HEK293 (cell line): ENCODE measurements at regions of chr6 and their contacts with region 1.

Region 1: GRCh38 chr6:159252955-159253508 is 83.8 kb downstream of the FNDC1 start:
- H3K4me3 ChIP-seq: no peak overlapping the region
- H3K27ac ChIP-seq: no peak overlapping the region
- H3K4me1 ChIP-seq: no peaks in the 10 kb centered on the region
- CTCF ChIP-seq: peak; percentile 43; the same call in 1 of the 2 replicates

Region 2: DNA sequence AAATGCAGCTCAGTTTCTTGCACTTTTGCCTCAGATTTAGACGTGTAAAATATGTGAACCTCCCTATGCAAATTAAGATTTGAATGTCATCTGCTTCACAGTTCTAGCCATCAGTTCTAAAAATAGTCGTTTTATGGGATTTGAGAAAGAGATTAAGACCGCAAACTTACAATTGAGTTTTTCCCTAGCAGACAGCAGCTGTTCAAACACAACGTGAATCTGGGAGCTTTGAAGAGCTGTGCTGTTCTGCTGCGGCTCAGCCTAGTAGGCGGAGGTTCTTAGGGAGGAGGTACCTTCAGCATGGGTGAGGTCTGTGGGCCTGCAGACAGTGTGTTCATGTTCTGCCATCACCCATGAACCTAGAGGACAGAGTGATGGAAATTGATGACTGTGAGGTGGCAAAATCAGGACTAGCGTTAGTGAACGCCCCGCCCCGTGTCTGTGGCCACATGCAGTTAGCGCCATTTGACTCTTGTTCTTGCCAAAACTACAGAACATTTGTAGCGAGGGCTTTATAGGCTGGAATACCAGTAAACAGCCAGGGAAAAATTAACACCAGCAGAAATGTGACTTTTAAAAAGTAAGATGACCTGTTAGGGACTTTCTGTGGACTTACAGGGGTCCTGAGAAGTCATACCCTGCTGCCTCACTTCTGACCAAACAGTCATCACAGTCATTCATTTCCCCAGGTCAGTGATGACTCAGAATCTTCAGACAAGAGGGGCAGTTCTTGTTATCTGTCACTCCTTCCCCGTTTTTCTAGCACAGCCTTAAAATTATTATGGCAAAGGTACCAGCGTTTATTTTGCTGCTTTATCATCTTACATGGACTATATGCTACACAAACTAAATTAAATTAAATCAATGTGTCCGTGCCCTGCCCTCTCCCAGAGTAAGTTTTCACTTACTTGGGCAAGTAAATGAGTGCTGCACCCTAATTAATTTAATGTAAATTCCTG is 777.4 kb before region 1 on chr6:
- CTCF ChIA-PET with region 1: no interaction called
- POLR2A ChIA-PET with region 1: no interaction called
- H3K4me3 ChIP-seq: no peak overlapping the region
- H3K27ac ChIP-seq: peak overlapping the region; percentile 56
- H3K4me1 ChIP-seq: peaks cover 12% of the 10 kb centered on the region
- CTCF ChIP-seq: no peak

Region 3: GRCh38 chr6:159212028-159212427 is 41.0 kb before region 1 on chr6:
- CTCF ChIA-PET with region 1: interaction called, 24 read pairs
- POLR2A ChIA-PET with region 1: no interaction called
- H3K4me3 ChIP-seq: no peak overlapping the region
- H3K27ac ChIP-seq: no peak overlapping the region
- H3K4me1 ChIP-seq: no peaks in the 10 kb centered on the region
- CTCF ChIP-seq: no peak

Region 4: GRCh38 chr6:159234102-159234553 is 18.9 kb before region 1 on chr6:
- CTCF ChIA-PET with region 1: interaction called, 32 read pairs
- POLR2A ChIA-PET with region 1: no interaction called
- H3K4me3 ChIP-seq: no peak overlapping the region
- H3K27ac ChIP-seq: no peak overlapping the region
- H3K4me1 ChIP-seq: no peaks in the 10 kb centered on the region
- CTCF ChIP-seq: no peak

Region 5: DNA sequence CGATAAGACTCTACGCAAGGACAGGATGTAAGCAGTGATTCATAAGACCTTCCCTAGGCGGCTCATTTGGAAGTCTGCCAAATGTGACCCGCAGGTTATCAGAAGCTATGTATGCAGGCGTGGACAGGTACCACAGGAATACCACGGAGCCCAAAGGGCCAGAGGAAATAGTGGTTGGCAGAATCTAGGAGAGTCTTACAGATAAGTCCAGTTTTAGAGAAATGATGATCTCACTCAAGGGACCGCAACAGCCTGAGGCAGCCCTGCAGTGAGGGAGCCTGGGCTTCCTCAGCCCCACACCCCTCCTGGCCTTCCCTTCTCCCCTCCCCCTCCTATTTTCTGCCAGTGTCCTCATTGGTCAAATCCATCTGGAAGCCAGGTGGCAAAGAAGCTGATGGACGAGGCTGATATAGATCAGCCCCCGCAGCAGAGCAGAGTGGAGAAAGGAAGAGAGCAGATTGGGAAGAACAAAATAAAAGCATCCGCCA is 26.8 kb after region 1 on chr6:
- CTCF ChIA-PET with region 1: interaction called, 15 read pairs
- POLR2A ChIA-PET with region 1: interaction called, 5 read pairs
- H3K4me3 ChIP-seq: no peak overlapping the region
- H3K27ac ChIP-seq: no peak overlapping the region
- H3K4me1 ChIP-seq: peaks cover 5% of the 10 kb centered on the region; the same call in 1 of the 2 replicates
- CTCF ChIP-seq: no peak

Region 6: DNA sequence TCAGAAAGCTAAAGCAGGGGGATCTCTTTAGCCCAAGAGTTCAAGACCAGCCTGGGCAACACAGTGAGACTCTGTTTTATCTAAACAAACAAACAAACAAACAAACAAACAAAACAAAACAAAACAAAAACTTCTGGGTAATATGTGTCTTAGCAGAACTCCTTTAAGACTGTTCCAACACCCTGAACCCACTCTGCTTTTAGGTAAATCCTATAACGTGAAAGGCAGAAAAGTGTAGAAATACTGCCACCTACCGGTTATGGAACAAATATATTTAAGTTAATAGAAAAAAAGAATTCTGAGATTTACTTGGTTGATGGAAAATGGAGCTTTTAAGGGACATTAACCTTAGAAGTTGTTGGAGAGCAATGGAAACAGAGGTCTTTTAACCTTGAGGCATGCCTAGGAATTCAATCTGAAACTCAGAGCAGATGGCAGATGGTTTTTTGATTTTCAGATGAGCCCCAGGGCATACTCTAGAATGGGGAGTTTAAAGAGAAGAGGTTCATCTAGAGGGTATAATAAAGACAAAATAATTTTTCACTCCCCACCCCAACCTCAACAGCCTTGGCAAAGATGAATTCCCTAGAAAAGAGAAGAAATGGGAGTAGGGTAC is 401.6 kb after region 1 on chr6:
- CTCF ChIA-PET with region 1: interaction called, 26 read pairs
- POLR2A ChIA-PET with region 1: no interaction called
- H3K4me3 ChIP-seq: no peak overlapping the region
- H3K27ac ChIP-seq: no peak overlapping the region
- H3K4me1 ChIP-seq: no peaks in the 10 kb centered on the region
- CTCF ChIP-seq: peak; percentile 44; the same call in 1 of the 2 replicates